Activated naive CD4-positive, alpha-beta T cell treated with anti-CD3 and anti-CD28 coated beads for 36 hours (primary cell): ENCODE measurements at regions of chr3 and their contacts with region 1.

Region 1: DNA sequence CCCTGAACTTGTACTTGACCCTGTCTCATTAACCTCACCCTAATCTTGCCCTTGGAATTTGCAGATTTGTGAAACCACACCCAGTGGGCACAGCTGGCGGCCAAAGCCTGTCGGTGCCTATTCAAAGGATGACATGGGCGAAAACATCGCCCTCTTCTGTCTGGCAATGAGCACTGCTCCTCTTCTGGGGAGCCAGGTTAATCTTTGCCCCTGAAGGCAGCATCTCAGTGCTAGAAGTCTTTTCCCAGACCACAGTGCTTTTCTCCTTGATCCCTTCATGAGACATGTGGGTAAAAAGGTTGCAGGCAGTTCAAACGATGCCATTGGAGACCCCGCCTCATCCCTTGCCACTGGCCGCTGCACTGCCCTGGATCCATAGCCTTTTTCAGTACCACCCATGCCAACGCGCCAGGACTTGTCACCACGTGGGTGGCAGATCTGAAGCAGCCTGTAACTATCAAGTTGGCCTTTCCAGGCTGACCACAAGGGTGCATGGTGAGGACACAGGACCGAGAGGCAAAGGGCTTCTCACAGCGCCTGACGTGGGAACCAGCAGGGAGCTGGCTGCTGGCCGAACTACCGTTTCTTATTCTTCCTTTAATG is 6.5 kb upstream of the DNASE1L3 start:
- DNase-seq: peak; percentile 73
- H3K4me3 Mint-ChIP-seq: no peak overlapping the region
- H3K27ac Mint-ChIP-seq: no peak overlapping the region
- H3K4me1 Mint-ChIP-seq: peaks cover 33% of the 10 kb centered on the region
- H3K27me3 Mint-ChIP-seq: no peaks in the 10 kb centered on the region

Region 2: DNA sequence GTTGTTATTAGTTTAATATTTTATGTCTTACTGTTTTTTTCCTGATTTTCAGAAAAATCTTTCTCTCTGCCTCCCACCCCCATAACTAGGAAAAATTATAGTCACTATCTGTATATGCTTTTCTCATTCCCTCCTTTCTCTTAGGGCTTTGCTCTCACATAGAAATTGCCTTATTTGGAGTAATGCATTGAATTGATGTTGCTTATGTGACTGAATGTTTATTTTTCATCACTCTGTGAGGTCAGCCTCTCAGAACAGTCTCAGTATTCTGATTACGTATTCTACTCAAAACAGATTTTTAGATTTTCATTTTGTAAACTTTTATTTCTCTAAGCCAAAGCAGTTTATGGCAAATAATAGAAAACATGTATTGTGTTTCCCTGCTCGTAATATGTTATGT is 340.2 kb before region 1 on chr3:
- CTCF ChIA-PET with region 1: no interaction called
- intact Hi-C with region 1: no loop called
- DNase-seq: no peak
- H3K4me3 Mint-ChIP-seq: no peak overlapping the region
- H3K27ac Mint-ChIP-seq: no peak overlapping the region
- H3K4me1 Mint-ChIP-seq: no peaks in the 10 kb centered on the region
- H3K27me3 Mint-ChIP-seq: no peaks in the 10 kb centered on the region

Region 3: DNA sequence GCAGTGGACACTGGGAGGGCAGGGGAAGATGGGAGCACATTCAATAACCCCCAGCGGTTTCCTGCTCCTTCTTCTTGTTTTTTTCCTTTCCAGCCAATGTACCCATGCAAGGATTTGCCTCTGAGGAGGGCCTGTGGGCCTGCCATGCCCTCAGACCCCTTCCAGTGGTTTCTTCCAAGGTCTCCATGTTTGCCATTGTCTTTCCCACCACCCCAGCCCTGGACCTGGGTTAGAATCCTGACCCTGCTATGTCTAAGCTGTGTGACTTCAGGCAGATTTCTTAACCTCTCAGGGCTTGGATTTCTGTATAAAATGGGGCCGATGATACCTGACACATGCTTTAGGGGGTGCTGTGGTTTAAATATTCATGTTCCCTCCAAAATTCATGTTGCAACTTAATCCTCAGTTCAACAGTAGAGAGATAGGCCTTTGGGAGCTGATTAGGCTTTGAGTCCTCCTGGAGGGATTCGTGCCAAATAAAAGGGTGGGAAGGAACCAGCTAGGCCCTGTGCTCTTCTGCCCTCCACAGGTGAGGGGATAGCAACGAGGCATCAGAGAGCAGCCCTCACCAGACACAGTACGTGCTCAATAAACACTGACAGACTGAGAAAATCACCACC is 255.4 kb before region 1 on chr3:
- CTCF ChIA-PET with region 1: no interaction called
- intact Hi-C with region 1: loop called (anchors 1 kb)
- DNase-seq: no peak
- H3K4me3 Mint-ChIP-seq: no peak overlapping the region
- H3K27ac Mint-ChIP-seq: no peak overlapping the region
- H3K4me1 Mint-ChIP-seq: peaks cover 7% of the 10 kb centered on the region
- H3K27me3 Mint-ChIP-seq: no peaks in the 10 kb centered on the region

Region 4: GRCh38 chr3:58188173-58188564 is 29.1 kb before region 1 on chr3:
- CTCF ChIA-PET with region 1: interaction called, 165 read pairs
- intact Hi-C with region 1: loop called (anchors 1 kb)
- DNase-seq: no peak
- H3K4me3 Mint-ChIP-seq: no peak overlapping the region
- H3K27ac Mint-ChIP-seq: no peak overlapping the region
- H3K4me1 Mint-ChIP-seq: no peaks in the 10 kb centered on the region
- H3K27me3 Mint-ChIP-seq: no peaks in the 10 kb centered on the region

Region 5: GRCh38 chr3:58206406-58207011 is 10.8 kb before region 1 on chr3:
- CTCF ChIA-PET with region 1: interaction called, 10 read pairs
- intact Hi-C with region 1: loop called (anchors 1 kb)
- DNase-seq: peak; percentile 64
- H3K4me3 Mint-ChIP-seq: no peak overlapping the region
- H3K27ac Mint-ChIP-seq: no peak overlapping the region
- H3K4me1 Mint-ChIP-seq: peaks cover 9% of the 10 kb centered on the region
- H3K27me3 Mint-ChIP-seq: peaks cover 5% of the 10 kb centered on the region

Region 6: GRCh38 chr3:58471025-58471887 is 253.9 kb after region 1 on chr3:
- CTCF ChIA-PET with region 1: no interaction called
- intact Hi-C with region 1: loop called (anchors 1 kb)
- DNase-seq: peak; percentile 81
- H3K4me3 Mint-ChIP-seq: no peak overlapping the region
- H3K27ac Mint-ChIP-seq: peak overlapping the region; percentile 86
- H3K4me1 Mint-ChIP-seq: peaks cover 20% of the 10 kb centered on the region
- H3K27me3 Mint-ChIP-seq: no peaks in the 10 kb centered on the region